ENCODE measurements at regions of chr2 and their contacts with region 1.

Region 1: GRCh38 chr2:240143801-240144648 is 3.6 kb upstream of the OTOS start:
- DNase-seq: peak; percentile 54 to 77
- H3K4me3 ChIP-seq: no peak overlapping the region
- H3K4me3 Mint-ChIP-seq: no peak overlapping the region
- H3K27ac Mint-ChIP-seq: no peak overlapping the region
- H3K4me1 ChIP-seq: no peaks in the 10 kb centered on the region
- H3K4me1 Mint-ChIP-seq: no peaks in the 10 kb centered on the region
- H3K27me3 ChIP-seq: no peaks in the 10 kb centered on the region; the same call in 1 of the 2 replicates
- H3K27me3 Mint-ChIP-seq: peaks cover 3% of the 10 kb centered on the region
- CTCF ChIP-seq: peak; percentile 79 to 80

Region 2: DNA sequence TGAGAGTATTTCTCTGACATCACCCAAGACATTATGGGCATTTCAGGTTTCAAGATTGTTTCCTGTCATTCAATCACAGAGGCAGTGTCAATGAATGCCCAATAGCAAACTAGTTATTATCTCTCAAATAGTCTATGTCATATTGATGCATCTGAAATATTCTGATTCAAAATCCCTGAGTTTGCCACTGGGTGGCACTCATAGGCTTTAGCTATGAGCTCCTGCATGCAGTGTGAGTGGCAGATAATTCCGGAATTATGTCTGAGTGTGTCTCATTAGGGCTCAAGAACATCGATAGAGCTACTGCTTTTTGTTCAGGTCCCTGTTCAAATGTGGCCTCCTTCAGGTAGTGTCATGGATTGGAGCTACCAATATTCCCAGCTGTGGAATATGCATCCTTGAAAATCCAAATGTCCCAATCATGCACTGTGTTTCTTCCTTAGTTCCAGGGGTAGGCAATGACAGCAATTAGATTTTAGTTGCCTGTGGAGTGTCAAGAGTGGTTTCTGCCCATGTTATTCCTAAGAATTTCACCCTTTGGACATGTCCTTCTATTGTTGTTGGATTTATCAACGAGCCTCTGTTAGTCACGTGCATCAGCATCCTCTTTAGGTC is 82.9 kb before region 1 on chr2:
- CTCF ChIA-PET with region 1: interaction called, 35 read pairs
- POLR2A ChIA-PET with region 1: no interaction called
- intact Hi-C with region 1: loop called (anchors 1 kb)
- DNase-seq: peak in 1 of 2 experiments; percentile 50
- H3K4me3 ChIP-seq: no peak overlapping the region
- H3K4me3 Mint-ChIP-seq: no peak overlapping the region
- H3K27ac Mint-ChIP-seq: no peak overlapping the region
- H3K4me1 ChIP-seq: no peaks in the 10 kb centered on the region
- H3K4me1 Mint-ChIP-seq: no peaks in the 10 kb centered on the region
- H3K27me3 ChIP-seq: no peaks in the 10 kb centered on the region
- H3K27me3 Mint-ChIP-seq: peaks cover 9% of the 10 kb centered on the region
- CTCF ChIP-seq: peak; percentile 44 to 49